A549 (cell line): ENCODE measurements at regions of chr15 and their contacts with region 1.

Region 1: GRCh38 chr15:51162865-51163762 is 68.4 kb upstream of the TNFAIP8L3 start:
- DNase-seq: peak; percentile 64 to 89
- ATAC-seq: peak; percentile 93 to 98
- H3K4me3 ChIP-seq: 0 out of 3 replicates have a peak overlapping the region, but pooled peaks have one; percentile 13
- H3K27ac ChIP-seq: no peak overlapping the region
- H3K4me1 ChIP-seq: no peaks in the 10 kb centered on the region
- CTCF ChIP-seq: peak; percentile 99
- EP300 ChIP-seq: no peak
- POLR2A ChIP-seq: no peak
- RAD21 ChIP-seq: peak; percentile 94

Region 2: GRCh38 chr15:51067510-51067909 is 95.6 kb before region 1 on chr15:
- CTCF ChIA-PET with region 1: interaction called, 12 read pairs
- POLR2A ChIA-PET with region 1: no interaction called
- DNase-seq: no peak
- ATAC-seq: no peak
- H3K4me3 ChIP-seq: no peak overlapping the region
- H3K27ac ChIP-seq: no peak overlapping the region
- H3K4me1 ChIP-seq: no peaks in the 10 kb centered on the region
- CTCF ChIP-seq: no peak
- EP300 ChIP-seq: no peak
- POLR2A ChIP-seq: no peak
- RAD21 ChIP-seq: no peak

Region 3: DNA sequence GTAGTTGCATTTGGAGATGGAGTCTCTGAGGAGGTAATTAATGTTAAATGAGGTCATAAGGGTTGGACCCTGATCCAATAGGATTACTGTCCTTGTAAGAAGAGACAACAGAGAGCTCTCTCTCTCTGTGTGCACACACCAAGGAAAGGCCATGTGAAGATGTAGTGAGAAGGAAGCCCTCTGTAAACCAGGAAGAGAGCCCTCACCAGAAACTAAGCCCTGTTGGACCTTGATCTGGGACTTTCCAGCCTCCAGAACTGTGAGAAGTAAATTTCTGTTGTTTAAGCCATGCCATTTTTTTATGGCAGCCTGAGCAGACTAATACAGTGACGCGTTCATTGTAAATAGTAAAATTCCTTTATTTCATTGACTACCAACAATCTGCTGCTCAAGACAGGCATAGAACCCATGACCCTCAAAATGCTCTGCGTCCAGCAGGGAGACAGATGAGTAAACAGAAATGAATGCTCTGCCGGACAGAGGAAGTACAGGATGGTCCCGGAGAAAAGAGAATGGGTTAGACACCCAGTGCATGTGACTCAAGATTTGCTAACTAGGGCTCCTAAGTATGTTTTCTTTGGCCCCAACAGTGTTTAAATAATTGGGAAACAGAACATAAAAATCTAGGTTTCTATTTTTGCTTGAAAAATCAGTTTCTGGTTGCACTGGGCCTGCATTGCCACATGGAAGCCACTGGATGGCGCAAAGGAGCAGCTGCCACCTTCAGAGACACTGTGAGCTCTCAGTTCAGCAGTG is 30.6 kb before region 1 on chr15:
- CTCF ChIA-PET with region 1: interaction called, 42 read pairs
- POLR2A ChIA-PET with region 1: no interaction called
- DNase-seq: peak; percentile 55 to 69
- ATAC-seq: peak; percentile 74 to 89
- H3K4me3 ChIP-seq: no peak overlapping the region
- H3K27ac ChIP-seq: peak overlapping the region; percentile 54 to 57
- H3K4me1 ChIP-seq: peaks cover 13% of the 10 kb centered on the region
- CTCF ChIP-seq: peak; percentile 86
- EP300 ChIP-seq: no peak
- POLR2A ChIP-seq: no peak
- RAD21 ChIP-seq: peak; percentile 68 to 69

Region 4: GRCh38 chr15:51198701-51199232 is 35.7 kb after region 1 on chr15:
- CTCF ChIA-PET with region 1: interaction called, 333 read pairs
- POLR2A ChIA-PET with region 1: no interaction called
- DNase-seq: no peak
- ATAC-seq: peak; percentile 38 to 43; a peak in 2 of 6 replicates
- H3K4me3 ChIP-seq: no peak overlapping the region
- H3K27ac ChIP-seq: no peak overlapping the region
- H3K4me1 ChIP-seq: 0 out of 3 replicates have a peak, but pooled peaks cover 8% of the 10 kb centered on the region
- CTCF ChIP-seq: no peak
- EP300 ChIP-seq: no peak
- POLR2A ChIP-seq: no peak
- RAD21 ChIP-seq: no peak

Region 5: DNA sequence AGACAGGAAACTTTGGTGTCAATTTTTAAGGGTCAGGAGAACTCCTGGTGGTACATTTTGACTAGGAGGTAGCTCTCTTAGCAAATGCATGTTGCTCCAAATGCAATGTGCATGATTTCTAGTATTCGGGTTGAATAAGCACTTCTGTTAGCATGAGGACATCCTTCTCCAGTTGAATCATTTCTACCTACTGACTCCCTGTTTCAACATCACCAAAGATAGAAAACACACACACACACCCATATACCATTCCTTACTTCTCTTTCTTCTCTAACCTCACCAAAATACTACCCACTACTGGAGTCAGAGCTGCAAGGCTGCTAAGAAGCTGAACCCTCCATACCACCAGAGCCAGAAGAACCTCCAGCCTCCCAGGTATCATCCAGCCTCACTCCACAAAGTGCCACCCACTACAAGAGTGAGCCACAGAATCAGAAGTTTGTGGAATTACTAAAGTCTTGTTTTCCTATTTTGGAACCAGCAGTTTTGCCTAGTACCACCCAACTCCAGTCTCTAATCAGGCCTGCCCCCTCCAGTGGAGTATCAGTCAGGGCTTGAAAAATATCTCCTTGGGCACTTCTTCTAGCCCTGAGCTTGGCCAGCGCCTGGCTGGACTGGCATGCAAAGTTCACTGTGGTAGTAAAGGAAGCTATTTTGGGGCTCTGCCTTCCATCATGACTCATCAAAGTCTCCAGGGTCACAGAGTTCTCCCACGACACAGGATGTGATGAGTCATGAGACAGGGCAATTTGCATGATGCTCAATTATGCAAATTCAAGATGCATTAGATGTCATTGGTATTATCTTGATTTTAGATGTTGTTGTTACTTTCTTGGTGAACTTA is 65.0 kb after region 1 on chr15:
- CTCF ChIA-PET with region 1: interaction called, 44 read pairs
- POLR2A ChIA-PET with region 1: no interaction called
- DNase-seq: peak; percentile 69 to 72
- ATAC-seq: peak; percentile 71 to 73
- H3K4me3 ChIP-seq: no peak overlapping the region
- H3K27ac ChIP-seq: peak overlapping the region; percentile 31 to 68; a peak in 5 of 6 replicates
- H3K4me1 ChIP-seq: peaks cover 14% of the 10 kb centered on the region
- CTCF ChIP-seq: no peak
- EP300 ChIP-seq: no peak
- POLR2A ChIP-seq: no peak
- RAD21 ChIP-seq: no peak

Region 6: DNA sequence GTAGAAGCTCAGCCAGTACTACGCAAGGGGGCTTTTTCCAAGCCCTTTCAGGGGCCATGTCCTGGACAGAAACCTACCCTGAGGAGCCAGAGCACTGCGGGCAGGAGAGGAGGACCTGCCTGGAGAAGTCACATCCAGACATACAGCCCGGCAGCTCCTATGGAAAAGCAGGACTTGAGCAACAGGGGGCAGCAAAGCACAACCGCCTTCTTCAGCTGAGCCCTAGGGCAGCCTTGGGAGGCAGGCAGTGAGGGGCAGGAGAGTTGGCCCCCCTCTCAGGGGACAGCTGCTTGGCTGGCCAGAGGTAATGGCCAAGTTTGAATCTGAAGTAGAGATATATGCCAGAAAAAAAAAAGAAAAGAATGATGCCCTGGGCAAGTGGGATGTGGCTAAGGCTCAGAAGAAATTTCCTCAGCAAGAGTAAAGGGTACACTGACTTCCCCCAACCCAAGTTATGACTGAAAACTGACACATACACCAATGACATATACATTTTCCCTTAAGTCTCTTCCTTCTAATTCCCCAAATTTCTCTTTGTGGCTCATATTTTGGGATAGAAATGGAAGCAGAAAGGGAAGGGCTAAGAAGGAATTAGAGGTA is 118.4 kb after region 1 on chr15:
- CTCF ChIA-PET with region 1: interaction called, 34 read pairs
- POLR2A ChIA-PET with region 1: no interaction called
- DNase-seq: peak; percentile 60 to 65
- ATAC-seq: peak; percentile 94 to 99; a peak in 5 of 6 replicates
- H3K4me3 ChIP-seq: no peak overlapping the region
- H3K27ac ChIP-seq: no peak overlapping the region
- H3K4me1 ChIP-seq: no peaks in the 10 kb centered on the region
- CTCF ChIP-seq: peak; percentile 70
- EP300 ChIP-seq: no peak
- POLR2A ChIP-seq: no peak
- RAD21 ChIP-seq: peak; percentile 80 to 85

Region 7: DNA sequence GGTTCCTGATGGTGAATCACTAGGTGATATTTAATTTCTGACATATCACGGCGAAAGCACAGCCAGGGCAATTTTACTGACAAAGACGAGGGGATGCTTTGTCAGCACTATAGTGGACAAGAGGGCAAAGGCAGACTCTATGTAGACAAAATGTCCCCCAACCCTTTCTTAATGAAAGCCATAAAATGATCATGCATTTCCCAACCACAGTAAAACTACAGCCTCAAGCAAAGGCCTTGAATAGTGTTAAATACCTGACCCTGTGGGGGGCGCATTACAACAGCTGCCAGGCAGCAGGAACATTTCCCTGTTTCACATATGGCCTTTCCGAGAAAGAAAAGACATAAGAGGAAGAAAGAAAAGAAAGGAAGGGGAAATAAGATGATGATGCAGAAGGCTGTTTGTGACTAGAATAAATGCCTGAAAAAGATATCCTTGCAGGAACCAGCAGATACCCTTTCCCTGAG is 227.9 kb after region 1 on chr15:
- CTCF ChIA-PET with region 1: interaction called, 28 read pairs
- POLR2A ChIA-PET with region 1: no interaction called
- DNase-seq: no peak
- ATAC-seq: no peak
- H3K4me3 ChIP-seq: no peak overlapping the region
- H3K27ac ChIP-seq: no peak overlapping the region
- H3K4me1 ChIP-seq: no peaks in the 10 kb centered on the region
- CTCF ChIP-seq: no peak
- EP300 ChIP-seq: no peak
- POLR2A ChIP-seq: no peak
- RAD21 ChIP-seq: no peak